Prostate gland (tissue), 2 donors: ENCODE measurements at regions of chr3 and their contacts with region 1.

Region 1: DNA sequence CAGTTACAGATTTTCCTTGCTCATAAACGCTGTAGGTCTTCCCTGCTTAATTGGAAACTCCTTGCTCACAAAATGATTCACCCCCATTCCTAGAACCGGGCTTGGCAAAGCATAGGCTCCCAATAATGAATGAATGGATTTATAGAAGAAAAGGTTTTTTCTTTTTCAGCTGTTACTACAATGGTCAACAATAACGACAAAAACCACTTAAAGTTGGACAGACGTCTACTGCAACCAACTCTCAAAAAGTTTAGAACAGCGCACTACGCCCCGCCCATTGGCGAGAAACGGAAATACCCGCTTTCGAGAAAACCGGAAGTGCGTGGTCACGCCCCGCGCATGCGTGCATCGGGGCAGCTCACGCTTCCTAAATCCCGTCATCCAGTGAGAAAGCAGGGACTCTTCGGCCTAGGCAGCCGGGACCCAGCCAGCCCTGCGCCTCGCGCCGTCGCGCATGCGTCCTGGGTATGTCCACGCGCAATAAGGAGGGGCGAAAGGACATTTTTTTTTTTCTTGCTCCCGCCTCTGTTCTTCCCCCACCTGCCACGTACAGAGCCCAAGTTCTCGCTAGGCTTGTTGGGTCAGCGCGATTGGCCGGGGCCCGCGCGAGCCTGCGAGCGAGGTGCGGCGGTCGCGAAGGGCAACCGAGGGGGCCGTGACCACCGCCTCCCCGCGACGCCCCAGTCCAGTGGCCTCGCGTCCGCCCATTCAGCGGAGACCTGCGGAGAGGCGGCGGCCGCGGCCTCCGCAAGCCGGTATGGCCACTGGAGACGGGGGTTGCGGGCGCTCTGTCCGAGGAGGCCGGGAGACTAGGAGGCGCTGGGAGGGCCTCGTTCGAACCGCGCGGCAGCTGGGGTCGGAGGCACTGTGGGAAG is at the start of gene TFG:
- DNase-seq: peak; percentile 95
- H3K4me3 ChIP-seq: peak within 1 kb of the TSS; percentile 83 to 85
- H3K27ac ChIP-seq: peak within 1 kb of the TSS; percentile 94 to 98
- H3K4me1 ChIP-seq: no peaks in the 10 kb centered on the region
- H3K27me3 ChIP-seq: no peaks in the 10 kb centered on the region
- CTCF ChIP-seq: peak in 1 of 4 experiments; percentile 16
- POLR2A ChIP-seq: peak; percentile 78
- total RNA-seq, gene TFG: 80.6 to 81.5 TPM

Region 2: GRCh38 chr3:100492059-100493006 is 216.9 kb before region 1 on chr3 and contains the start of gene TMEM45A:
- intact Hi-C with region 1: loop called (anchors 10 kb)
- DNase-seq: peak; percentile 93
- H3K4me3 ChIP-seq: peak within 1 kb of the TSS; percentile 36 to 42
- H3K27ac ChIP-seq: peak within 1 kb of the TSS; percentile 45 to 74
- H3K4me1 ChIP-seq: no peaks in the 10 kb centered on the region
- H3K27me3 ChIP-seq: no peaks in the 10 kb centered on the region
- CTCF ChIP-seq: peak in 1 of 4 experiments; percentile 31
- POLR2A ChIP-seq: peak; percentile 51
- total RNA-seq, gene TMEM45A: 6.3 to 11.8 TPM